Ascending aorta (tissue), 2 donors: ENCODE measurements at regions of chr7 and their contacts with region 1.

Region 1: GRCh38 chr7:32495298-32496176 is at the start of gene AVL9:
- DNase-seq: peak; percentile 96 to 99
- H3K4me3 ChIP-seq: peak within 1 kb of the TSS; percentile 82 to 97
- H3K27ac ChIP-seq: peak within 1 kb of the TSS; percentile 98 to 99
- H3K4me1 ChIP-seq: peaks cover 7 to 13% of the 10 kb centered on the region in 2 donors
- H3K27me3 ChIP-seq: no peaks in the 10 kb centered on the region
- CTCF ChIP-seq: no peak
- total RNA-seq, gene AVL9: 78.3 TPM

Region 2: GRCh38 chr7:32564542-32564941 is 69.0 kb after region 1 on chr7:
- intact Hi-C with region 1: loop called (anchors 10 kb)
- DNase-seq: no peak
- H3K4me3 ChIP-seq: no peak overlapping the region
- H3K27ac ChIP-seq: no peak overlapping the region
- H3K4me1 ChIP-seq: no peaks in the 10 kb centered on the region
- H3K27me3 ChIP-seq: no peaks in the 10 kb centered on the region
- CTCF ChIP-seq: no peak

Region 3: GRCh38 chr7:32957326-32958045 is 461.9 kb after region 1 on chr7 and contains the start of gene FKBP9:
- intact Hi-C with region 1: loop called (anchors 2 kb)
- DNase-seq: peak in 1 of 2 donors; percentile 84
- H3K4me3 ChIP-seq: peak within 1 kb of the TSS; percentile 72 to 97
- H3K27ac ChIP-seq: peak within 1 kb of the TSS; percentile 79 to 84
- H3K4me1 ChIP-seq: peaks cover 0 to 6% of the 10 kb centered on the region in 2 donors
- H3K27me3 ChIP-seq: no peaks in the 10 kb centered on the region
- CTCF ChIP-seq: no peak
- total RNA-seq, gene FKBP9: 302 TPM